CD8-positive, alpha-beta memory T cell (primary cell): ENCODE measurements at regions of chr1 and their contacts with region 1.

Region 1: GRCh38 chr1:109630081-109630897 is 10.7 kb downstream of the AMPD2 start:
- DNase-seq: peak in 2 of 5 donors; percentile 37 to 63
- H3K4me3 ChIP-seq: no peak overlapping the region
- H3K4me3 Mint-ChIP-seq: peak overlapping the region in 1 of 7 donors; percentile 70
- H3K27ac ChIP-seq: no peak overlapping the region
- H3K27ac Mint-ChIP-seq: peak overlapping the region in 4 of 8 donors; percentile 35 to 84 (median 58)
- H3K4me1 ChIP-seq: peaks cover 9% of the 10 kb centered on the region
- H3K4me1 Mint-ChIP-seq: peaks cover 7 to 12% (median 9%) of the 10 kb centered on the region in 3 donors
- H3K27me3 ChIP-seq: no peaks in the 10 kb centered on the region
- H3K27me3 Mint-ChIP-seq: no peaks in the 10 kb centered on the region

Region 2: DNA sequence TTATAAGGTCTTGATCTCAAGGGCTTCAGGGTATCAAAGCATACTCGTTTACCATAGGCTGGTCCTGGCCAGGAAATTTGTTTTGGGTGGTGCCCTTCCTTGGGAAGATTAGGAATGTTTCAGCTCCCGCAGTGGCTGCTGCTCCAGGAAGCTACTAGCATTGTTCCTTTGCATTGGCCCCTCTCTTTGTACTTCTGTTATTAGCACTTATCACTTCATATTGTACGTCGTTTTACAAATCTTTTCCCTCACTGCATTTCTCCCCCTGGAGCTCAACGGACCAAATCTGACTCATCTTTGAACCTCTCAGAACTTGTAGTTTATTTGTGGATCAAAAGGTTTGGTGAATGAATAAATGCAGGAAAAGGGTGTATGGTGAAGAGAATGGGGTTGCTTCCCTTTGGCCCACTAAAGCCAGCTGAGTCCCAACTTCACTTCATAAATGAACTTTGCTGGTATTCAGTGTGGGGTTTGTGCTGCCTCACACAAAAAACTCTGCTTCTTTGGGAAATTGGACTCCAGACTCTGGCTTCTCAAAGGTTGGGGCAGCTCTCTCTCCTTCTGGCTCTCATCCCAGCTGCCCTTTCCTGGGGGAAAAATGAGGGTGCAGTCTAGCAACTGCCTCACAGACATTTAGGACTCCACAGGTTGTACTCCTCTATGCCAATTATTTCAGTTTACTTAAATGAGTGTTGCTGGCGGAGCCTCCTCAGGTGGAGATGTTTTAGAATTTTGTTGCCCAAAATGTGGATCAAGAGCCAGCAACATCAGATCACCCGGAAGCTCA is 16.7 kb before region 1 on chr1:
- CTCF ChIA-PET with region 1: interaction called, 12 read pairs
- POLR2A ChIA-PET with region 1: no interaction called
- DNase-seq: no peak
- H3K4me3 ChIP-seq: no peak overlapping the region
- H3K4me3 Mint-ChIP-seq: no peak overlapping the region
- H3K27ac ChIP-seq: no peak overlapping the region
- H3K27ac Mint-ChIP-seq: peak overlapping the region in 1 of 8 donors; percentile 25
- H3K4me1 ChIP-seq: peaks cover 8% of the 10 kb centered on the region
- H3K4me1 Mint-ChIP-seq: peaks cover 20 to 23% (median 21%) of the 10 kb centered on the region in 3 donors
- H3K27me3 ChIP-seq: no peaks in the 10 kb centered on the region
- H3K27me3 Mint-ChIP-seq: peaks cover 2 to 3% of the 10 kb centered on the region in 2 donors

Region 3: GRCh38 chr1:109649491-109649914 is 19.2 kb after region 1 on chr1:
- CTCF ChIA-PET with region 1: interaction called, 12 read pairs
- POLR2A ChIA-PET with region 1: no interaction called
- DNase-seq: no peak
- H3K4me3 ChIP-seq: no peak overlapping the region
- H3K4me3 Mint-ChIP-seq: peak overlapping the region in 1 of 7 donors; percentile 19
- H3K27ac ChIP-seq: no peak overlapping the region
- H3K27ac Mint-ChIP-seq: no peak overlapping the region
- H3K4me1 ChIP-seq: no peaks in the 10 kb centered on the region
- H3K4me1 Mint-ChIP-seq: no peaks in the 10 kb centered on the region
- H3K27me3 ChIP-seq: no peaks in the 10 kb centered on the region
- H3K27me3 Mint-ChIP-seq: peaks cover 10 to 30% of the 10 kb centered on the region in 2 donors